ENCODE measurements at regions of chr6 and their contacts with region 1.

Region 1: GRCh38 chr6:37051138-37052026 is 45.9 kb downstream of the FGD2 start:
- DNase-seq: peak; percentile 84 to 95 (median 90)
- ATAC-seq: peak; percentile 76
- H3K4me3 ChIP-seq: no peak overlapping the region
- H3K4me3 Mint-ChIP-seq: peak overlapping the region; percentile 76
- H3K27ac ChIP-seq: peak overlapping the region in 1 of 2 donors; percentile 78
- H3K27ac Mint-ChIP-seq: peak overlapping the region; percentile 92
- H3K4me1 ChIP-seq: peaks cover 59% of the 10 kb centered on the region
- H3K4me1 Mint-ChIP-seq: peaks cover 56% of the 10 kb centered on the region
- H3K27me3 ChIP-seq: no peaks in the 10 kb centered on the region
- H3K27me3 Mint-ChIP-seq: no peaks in the 10 kb centered on the region
- CTCF ChIP-seq: peak; percentile 90

Region 2: DNA sequence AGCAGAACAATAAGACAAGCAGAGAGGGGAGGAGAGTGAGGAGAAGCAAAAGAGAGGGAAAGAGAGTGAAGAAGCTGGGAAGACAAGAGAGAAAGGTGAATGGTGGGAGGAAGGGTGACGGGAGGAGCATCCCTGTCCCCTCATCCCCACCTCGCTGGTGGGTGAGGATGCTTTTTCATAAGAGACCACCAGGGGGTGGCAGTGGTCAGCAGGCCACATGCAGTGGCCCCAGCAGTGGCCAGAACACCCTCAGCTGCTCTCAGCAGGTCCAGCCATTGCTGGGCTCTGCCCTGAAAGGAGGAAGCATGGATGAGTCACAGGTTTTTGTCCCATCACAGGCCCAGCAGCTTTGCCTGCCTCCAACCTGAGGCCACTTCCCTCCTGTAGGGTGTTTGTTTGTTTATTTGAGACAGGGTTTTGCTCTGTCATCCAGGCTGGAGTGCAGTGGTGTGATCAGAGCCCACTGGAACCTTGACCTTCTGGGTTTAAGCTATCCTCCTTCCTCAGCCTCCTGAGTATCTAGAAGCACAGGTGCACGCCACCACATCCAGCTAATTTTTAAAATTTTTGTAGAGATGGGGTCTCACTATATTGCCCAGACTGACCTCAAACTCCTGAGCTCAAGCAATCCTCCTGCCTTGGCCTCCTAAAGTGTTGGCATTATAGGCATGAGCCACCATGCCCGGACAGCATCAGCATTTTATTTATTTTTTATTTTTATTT is 22.0 kb before region 1 on chr6:
- CTCF ChIA-PET with region 1: interaction called, 28 read pairs
- POLR2A ChIA-PET with region 1: interaction called, 6 read pairs
- intact Hi-C with region 1: no loop called
- DNase-seq: peak in 5 of 14 experiments; percentile 31 to 80 (median 60)
- ATAC-seq: peak; percentile 57
- H3K4me3 ChIP-seq: no peak overlapping the region
- H3K4me3 Mint-ChIP-seq: no peak overlapping the region
- H3K27ac ChIP-seq: no peak overlapping the region
- H3K27ac Mint-ChIP-seq: no peak overlapping the region
- H3K4me1 ChIP-seq: peaks cover 16% of the 10 kb centered on the region
- H3K4me1 Mint-ChIP-seq: peaks cover 5% of the 10 kb centered on the region
- H3K27me3 ChIP-seq: no peaks in the 10 kb centered on the region
- H3K27me3 Mint-ChIP-seq: no peaks in the 10 kb centered on the region
- CTCF ChIP-seq: peak; percentile 60

Region 3: GRCh38 chr6:37102279-37103168 is 51.1 kb after region 1 on chr6:
- CTCF ChIA-PET with region 1: interaction called, 6 read pairs
- POLR2A ChIA-PET with region 1: interaction called, 4 read pairs
- intact Hi-C with region 1: loop called in 1 of 2 experiments (anchors 2 kb)
- DNase-seq: peak; percentile 49 to 92 (median 68)
- ATAC-seq: peak; percentile 93
- H3K4me3 ChIP-seq: peak overlapping the region; percentile 51
- H3K4me3 Mint-ChIP-seq: peak overlapping the region; percentile 72
- H3K27ac ChIP-seq: peak overlapping the region in 1 of 2 donors; percentile 62
- H3K27ac Mint-ChIP-seq: peak overlapping the region; percentile 81
- H3K4me1 ChIP-seq: peaks cover 23% of the 10 kb centered on the region
- H3K4me1 Mint-ChIP-seq: peaks cover 39% of the 10 kb centered on the region
- H3K27me3 ChIP-seq: no peaks in the 10 kb centered on the region
- H3K27me3 Mint-ChIP-seq: no peaks in the 10 kb centered on the region
- CTCF ChIP-seq: no peak

Region 4: DNA sequence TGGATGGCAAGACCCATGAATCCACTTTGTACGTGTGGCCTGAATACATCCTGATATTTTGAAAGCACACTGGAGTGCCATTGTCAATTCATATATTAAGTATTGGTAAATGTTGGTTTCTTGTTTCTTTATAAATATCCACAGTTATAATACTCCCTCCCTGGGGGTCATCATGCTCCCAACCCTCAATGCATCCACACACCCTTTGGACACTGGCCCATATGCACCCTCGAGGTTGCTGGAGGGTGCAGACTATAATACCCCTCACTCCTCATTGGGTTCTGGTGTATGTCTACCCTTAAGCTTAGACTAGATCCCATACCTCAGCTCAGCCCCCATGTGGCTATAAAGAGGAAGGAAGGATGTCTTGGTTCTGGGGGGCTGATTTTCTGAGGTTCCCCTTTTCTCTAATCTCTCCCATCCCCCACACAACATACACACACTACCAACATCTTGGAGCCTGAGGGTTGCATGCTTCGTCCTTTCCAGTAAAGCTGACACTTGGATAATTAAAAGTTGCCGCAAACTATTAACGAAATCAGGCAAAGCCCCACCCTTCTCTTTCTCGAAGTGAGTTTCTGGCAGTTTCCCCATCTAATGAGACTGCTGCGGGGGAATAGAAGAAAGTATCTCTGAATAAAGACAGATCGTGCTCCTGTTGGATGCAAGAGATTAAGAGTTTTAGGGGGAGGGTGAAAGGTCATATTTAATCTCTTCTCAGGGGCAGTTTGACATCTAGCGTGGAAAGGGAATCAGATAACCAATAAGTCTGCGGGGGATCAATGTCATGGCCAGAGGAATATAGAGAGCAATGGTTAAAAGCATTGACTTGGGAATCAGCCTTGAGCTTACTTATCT is 125.9 kb after region 1 on chr6:
- CTCF ChIA-PET with region 1: interaction called, 116 read pairs
- POLR2A ChIA-PET with region 1: interaction called, 147 read pairs
- intact Hi-C with region 1: loop called in 1 of 2 experiments (anchors 1 kb)
- DNase-seq: no peak
- ATAC-seq: no peak
- H3K4me3 ChIP-seq: no peak overlapping the region
- H3K4me3 Mint-ChIP-seq: peak overlapping the region; percentile 21
- H3K27ac ChIP-seq: no peak overlapping the region
- H3K27ac Mint-ChIP-seq: peak overlapping the region; percentile 65
- H3K4me1 ChIP-seq: peaks cover 82% of the 10 kb centered on the region
- H3K4me1 Mint-ChIP-seq: peaks cover 65% of the 10 kb centered on the region
- H3K27me3 ChIP-seq: no peaks in the 10 kb centered on the region
- H3K27me3 Mint-ChIP-seq: no peaks in the 10 kb centered on the region
- CTCF ChIP-seq: no peak

Region 5: GRCh38 chr6:37200085-37200484 is 148.7 kb after region 1 on chr6:
- CTCF ChIA-PET with region 1: interaction called, 10 read pairs
- POLR2A ChIA-PET with region 1: interaction called, 3 read pairs
- intact Hi-C with region 1: no loop called
- DNase-seq: no peak
- ATAC-seq: no peak
- H3K4me3 ChIP-seq: no peak overlapping the region
- H3K4me3 Mint-ChIP-seq: no peak overlapping the region
- H3K27ac ChIP-seq: no peak overlapping the region
- H3K27ac Mint-ChIP-seq: no peak overlapping the region
- H3K4me1 ChIP-seq: peaks cover 22% of the 10 kb centered on the region
- H3K4me1 Mint-ChIP-seq: peaks cover 26% of the 10 kb centered on the region
- H3K27me3 ChIP-seq: no peaks in the 10 kb centered on the region
- H3K27me3 Mint-ChIP-seq: no peaks in the 10 kb centered on the region
- CTCF ChIP-seq: no peak

Region 6: DNA sequence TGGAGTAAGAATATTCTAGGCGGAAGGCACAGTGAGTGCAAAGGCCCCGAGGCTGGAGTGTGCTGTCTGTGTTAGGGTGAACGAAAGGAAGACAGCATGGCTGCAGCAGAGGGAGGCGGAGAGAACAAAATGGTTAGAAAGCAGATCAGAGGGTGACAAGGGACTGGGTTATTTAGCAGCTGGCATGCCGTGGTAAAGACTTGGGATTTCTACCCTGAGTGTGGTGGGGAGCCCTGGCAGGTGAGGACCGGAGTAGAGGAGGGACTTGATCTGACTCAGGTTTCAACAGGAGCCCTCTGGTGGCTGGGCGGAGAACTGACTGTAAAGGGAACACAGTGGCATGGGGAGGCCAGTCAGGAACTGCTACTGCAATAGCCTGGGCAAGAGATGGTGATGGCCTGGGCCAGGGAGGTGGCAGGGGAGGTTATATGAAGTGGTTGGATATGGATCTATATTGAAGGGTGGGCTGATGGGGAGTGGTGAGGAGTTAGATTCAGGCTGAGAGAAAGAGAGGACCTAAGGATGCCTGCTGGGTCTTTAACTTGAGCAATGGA is 156.6 kb after region 1 on chr6:
- CTCF ChIA-PET with region 1: interaction called, 78 read pairs
- POLR2A ChIA-PET with region 1: interaction called, 17 read pairs
- intact Hi-C with region 1: loop called (anchors 1 kb)
- DNase-seq: peak; percentile 83 to 93 (median 89)
- ATAC-seq: peak; percentile 73
- H3K4me3 ChIP-seq: no peak overlapping the region
- H3K4me3 Mint-ChIP-seq: peak overlapping the region; percentile 26
- H3K27ac ChIP-seq: no peak overlapping the region
- H3K27ac Mint-ChIP-seq: peak overlapping the region; percentile 58
- H3K4me1 ChIP-seq: peaks cover 56% of the 10 kb centered on the region
- H3K4me1 Mint-ChIP-seq: peaks cover 50% of the 10 kb centered on the region
- H3K27me3 ChIP-seq: no peaks in the 10 kb centered on the region
- H3K27me3 Mint-ChIP-seq: no peaks in the 10 kb centered on the region
- CTCF ChIP-seq: peak; percentile 86

Region 7: GRCh38 chr6:37324131-37325033 is 273.0 kb after region 1 on chr6:
- CTCF ChIA-PET with region 1: no interaction called
- POLR2A ChIA-PET with region 1: no interaction called
- intact Hi-C with region 1: no loop called
- DNase-seq: peak in 2 of 14 experiments; percentile 7 to 8
- ATAC-seq: no peak
- H3K4me3 ChIP-seq: no peak overlapping the region
- H3K4me3 Mint-ChIP-seq: no peak overlapping the region
- H3K27ac ChIP-seq: no peak overlapping the region
- H3K27ac Mint-ChIP-seq: peak overlapping the region; percentile 16
- H3K4me1 ChIP-seq: no peaks in the 10 kb centered on the region
- H3K4me1 Mint-ChIP-seq: no peaks in the 10 kb centered on the region
- H3K27me3 ChIP-seq: no peaks in the 10 kb centered on the region
- H3K27me3 Mint-ChIP-seq: no peaks in the 10 kb centered on the region
- CTCF ChIP-seq: no peak